ENCODE measurements at regions of chr10 and their contacts with region 1.

Region 1: DNA sequence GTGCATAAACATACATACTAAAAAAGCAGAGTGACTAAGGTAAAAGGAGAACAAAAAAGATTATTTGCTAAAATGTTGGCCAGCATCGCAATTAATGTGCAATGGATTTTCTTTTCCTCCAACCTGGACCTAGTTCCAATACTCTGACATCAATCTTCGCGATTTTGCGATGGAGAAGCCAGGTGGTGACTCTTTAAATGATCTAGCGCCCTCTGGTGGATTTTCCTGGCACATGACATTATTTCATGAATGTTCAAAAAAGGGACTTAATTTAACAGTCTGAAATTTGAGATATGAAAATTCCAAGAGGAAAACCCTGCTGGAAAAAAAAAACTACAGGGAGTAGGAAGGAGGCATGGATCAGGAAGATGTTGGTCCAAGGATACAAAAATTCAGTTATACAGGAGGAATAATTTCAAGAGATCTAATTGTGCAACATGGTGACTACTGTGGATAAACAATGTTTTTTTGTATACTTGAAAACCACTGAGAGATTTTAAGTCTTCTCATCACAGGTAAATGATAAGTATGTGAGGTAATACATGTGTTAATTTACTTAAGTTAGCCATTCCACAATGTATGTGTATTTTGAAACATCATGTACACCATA is 4.3 kb upstream of the KCNMA1 start:
- DNase-seq: peak in 1 of 2 experiments; percentile 71
- H3K4me3 ChIP-seq: no peak overlapping the region
- H3K27ac ChIP-seq: no peak overlapping the region
- H3K4me1 ChIP-seq: peaks cover 0 to 6% (median 4%) of the 10 kb centered on the region in 4 experiments; a peak in 6 of 7 replicates
- H3K27me3 ChIP-seq: peaks cover 11 to 37% (median 34%) of the 10 kb centered on the region in 4 experiments
- CTCF ChIP-seq: peak in 2 of 3 experiments; percentile 69 to 71; a peak in 3 of 4 replicates
- EP300 ChIP-seq: no peak
- POLR2A ChIP-seq: no peak
- RAD21 ChIP-seq: peak; percentile 87 to 89

Region 2: DNA sequence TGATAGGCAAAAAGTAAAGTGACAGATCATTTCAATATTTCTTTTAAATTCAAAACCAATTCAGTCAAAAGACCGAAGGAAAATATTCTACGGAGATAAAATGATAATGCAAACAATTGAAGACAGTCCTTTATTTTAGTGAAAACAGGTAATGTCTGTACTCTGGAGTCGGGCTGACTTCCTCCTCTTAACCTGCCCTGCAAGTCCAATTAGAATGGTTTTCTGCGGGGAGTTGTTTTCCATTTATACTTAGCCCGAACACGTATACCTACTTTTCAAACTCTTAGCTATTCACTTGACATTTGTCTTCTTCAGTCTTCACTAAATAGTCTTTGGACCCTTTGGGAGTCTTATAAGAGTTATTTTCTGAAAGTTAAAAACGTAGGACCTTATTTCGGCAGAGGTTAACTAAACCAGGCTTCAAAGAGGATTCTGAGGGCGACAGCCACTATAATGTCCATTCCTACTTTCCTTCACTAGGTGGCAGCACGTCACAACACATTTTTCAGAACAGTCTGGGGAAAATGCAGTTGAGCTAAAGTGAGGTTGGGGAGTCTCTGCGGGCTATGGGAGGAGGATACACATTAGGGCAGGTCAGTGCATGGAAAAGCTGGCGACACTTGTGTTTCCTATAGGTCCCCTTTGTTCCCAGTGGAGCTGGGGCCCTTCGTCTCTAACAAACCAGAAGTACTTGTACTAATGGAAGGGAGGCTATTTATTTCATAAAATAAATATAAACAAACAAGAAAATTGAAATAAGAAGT is 476.3 kb before region 1 on chr10:
- CTCF ChIA-PET with region 1: interaction called, 54 read pairs
- POLR2A ChIA-PET with region 1: no interaction called
- DNase-seq: peak; percentile 41 to 74
- H3K4me3 ChIP-seq: no peak overlapping the region
- H3K27ac ChIP-seq: no peak overlapping the region
- H3K4me1 ChIP-seq: no peaks in the 10 kb centered on the region
- H3K27me3 ChIP-seq: no peaks in the 10 kb centered on the region
- CTCF ChIP-seq: peak; percentile 26 to 84 (median 71)
- EP300 ChIP-seq: no peak
- POLR2A ChIP-seq: no peak
- RAD21 ChIP-seq: peak; percentile 91 to 95

Region 3: DNA sequence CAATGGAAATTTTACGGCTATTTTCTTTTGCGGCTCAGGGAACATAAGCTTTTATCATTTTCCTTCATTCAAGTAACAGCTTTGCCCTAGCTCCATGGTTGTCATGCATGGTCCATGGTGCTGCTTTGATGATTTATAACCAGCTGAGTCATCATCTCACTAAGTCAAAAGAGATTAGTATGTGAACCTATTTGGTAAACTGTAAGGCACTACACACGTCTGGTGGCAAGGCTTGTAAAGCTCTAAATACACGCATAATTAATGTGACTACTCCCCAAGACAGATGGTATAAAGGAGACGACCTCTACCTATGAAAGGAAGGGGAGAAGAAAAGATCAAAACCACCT is 344.5 kb before region 1 on chr10:
- CTCF ChIA-PET with region 1: interaction called, 27 read pairs
- POLR2A ChIA-PET with region 1: no interaction called
- DNase-seq: no peak
- H3K4me3 ChIP-seq: no peak overlapping the region
- H3K27ac ChIP-seq: no peak overlapping the region
- H3K4me1 ChIP-seq: peaks cover 0 to under 1% (median 0%) of the 10 kb centered on the region in 4 experiments; a peak in 2 of 7 replicates
- H3K27me3 ChIP-seq: no peaks in the 10 kb centered on the region
- CTCF ChIP-seq: no peak
- EP300 ChIP-seq: no peak
- POLR2A ChIP-seq: no peak
- RAD21 ChIP-seq: no peak

Region 4: DNA sequence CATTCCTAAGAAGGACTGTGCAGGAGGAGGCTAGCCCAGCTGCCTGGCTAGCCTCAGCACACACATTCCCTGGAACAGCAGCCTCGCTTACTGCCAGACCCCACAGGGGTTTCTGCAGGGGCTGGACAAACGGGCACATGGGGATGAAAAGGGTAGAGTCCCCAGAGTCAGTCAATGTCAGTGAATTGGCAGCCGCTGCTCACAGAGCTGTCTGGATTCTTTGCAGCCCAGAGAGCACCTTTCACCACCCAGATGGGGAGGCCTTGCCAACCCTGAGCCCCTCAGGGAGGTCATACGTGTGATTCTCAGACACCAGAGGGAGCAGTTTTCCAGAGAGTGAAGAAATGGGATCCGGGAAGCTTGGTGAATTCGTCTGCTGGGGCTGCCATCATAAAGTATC is 147.6 kb before region 1 on chr10:
- CTCF ChIA-PET with region 1: interaction called, 25 read pairs
- POLR2A ChIA-PET with region 1: no interaction called
- DNase-seq: no peak
- H3K4me3 ChIP-seq: no peak overlapping the region
- H3K27ac ChIP-seq: no peak overlapping the region
- H3K4me1 ChIP-seq: peaks cover 2 to 4% (median 3%) of the 10 kb centered on the region in 4 experiments; a peak in 3 of 7 replicates
- H3K27me3 ChIP-seq: no peaks in the 10 kb centered on the region
- CTCF ChIP-seq: peak; percentile 53 to 67 (median 66)
- EP300 ChIP-seq: no peak
- POLR2A ChIP-seq: no peak
- RAD21 ChIP-seq: peak; percentile 76 to 79

Region 5: DNA sequence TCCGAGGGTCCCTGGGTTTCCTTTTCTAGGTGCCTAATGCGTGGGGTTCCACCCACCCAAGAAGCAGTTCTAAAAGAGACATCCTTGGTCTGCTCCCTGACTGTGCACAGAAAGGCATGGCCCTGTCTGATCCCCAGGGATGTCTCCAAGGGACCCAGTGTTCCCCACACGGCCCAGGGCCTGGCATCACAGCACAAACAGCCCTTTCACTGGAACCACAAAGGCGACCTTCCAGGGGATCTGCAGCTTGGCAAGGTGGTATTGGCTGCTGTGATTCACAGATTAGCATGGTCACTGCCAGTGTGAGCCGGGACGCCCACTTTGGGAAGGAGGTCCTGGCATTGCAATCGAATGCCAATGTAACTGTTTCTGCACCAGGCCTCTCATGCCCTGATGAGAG is 10.7 kb before region 1 on chr10:
- CTCF ChIA-PET with region 1: interaction called, 10 read pairs
- POLR2A ChIA-PET with region 1: interaction called, 3 read pairs
- DNase-seq: no peak
- H3K4me3 ChIP-seq: no peak overlapping the region
- H3K27ac ChIP-seq: no peak overlapping the region
- H3K4me1 ChIP-seq: peaks cover 2 to 17% (median 10%) of the 10 kb centered on the region in 4 experiments; a peak in 5 of 7 replicates
- H3K27me3 ChIP-seq: peaks cover under 1 to 10% (median 7%) of the 10 kb centered on the region in 4 experiments
- CTCF ChIP-seq: no peak
- EP300 ChIP-seq: no peak
- POLR2A ChIP-seq: no peak
- RAD21 ChIP-seq: no peak

Region 6: GRCh38 chr10:77692782-77693181 is 50.9 kb after region 1 on chr10:
- CTCF ChIA-PET with region 1: interaction called, 18 read pairs
- POLR2A ChIA-PET with region 1: no interaction called
- DNase-seq: no peak
- H3K4me3 ChIP-seq: no peak overlapping the region
- H3K27ac ChIP-seq: no peak overlapping the region
- H3K4me1 ChIP-seq: no peaks in the 10 kb centered on the region
- H3K27me3 ChIP-seq: no peaks in the 10 kb centered on the region
- CTCF ChIP-seq: no peak
- EP300 ChIP-seq: no peak
- POLR2A ChIP-seq: no peak
- RAD21 ChIP-seq: no peak; a peak in 1 of 4 replicates

Measured in H1 (cell line).